Caco-2 (cell line): ENCODE measurements at regions of chr6 and their contacts with region 1.

Region 1: DNA sequence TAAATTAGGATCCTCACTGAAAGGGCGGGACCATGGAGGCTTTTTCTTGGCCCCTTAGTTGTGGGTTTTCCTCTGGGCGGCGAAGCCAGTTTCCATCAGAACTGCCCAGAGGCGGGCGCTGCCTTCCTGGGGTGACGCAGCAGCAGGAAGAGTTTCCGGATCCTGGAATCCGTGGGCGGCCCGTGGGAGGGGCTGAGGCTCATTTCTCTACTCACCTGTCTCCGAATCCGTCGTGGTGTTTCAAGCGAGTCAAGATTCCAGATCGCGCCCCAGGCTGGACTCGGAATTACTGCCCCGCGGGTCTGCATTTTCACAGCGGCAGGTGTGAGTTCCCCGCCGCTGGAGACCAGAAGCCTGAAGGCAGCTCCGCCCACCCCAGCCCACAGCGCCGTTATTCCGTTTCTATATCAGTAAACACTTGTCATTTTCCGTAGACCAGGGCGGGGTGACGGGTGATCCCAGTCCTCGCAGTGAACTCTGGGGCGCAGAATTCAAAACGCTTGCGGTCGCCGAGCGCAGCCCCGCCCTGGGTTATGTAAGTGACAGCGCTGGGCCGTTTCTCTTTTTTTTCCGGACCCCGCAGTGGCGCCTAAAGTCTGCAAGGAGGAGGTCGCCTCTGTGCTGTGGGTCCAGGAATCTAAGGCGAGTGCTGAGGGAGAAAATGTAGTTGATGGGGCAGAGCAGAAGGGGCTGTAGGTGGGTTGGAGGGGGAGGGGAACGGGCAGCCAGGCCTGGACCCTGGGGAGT is 27.2 kb upstream of the POU5F1 start:
- DNase-seq: peak; percentile 81 to 85
- H3K4me3 ChIP-seq: peak overlapping the region; percentile 64
- H3K4me3 Mint-ChIP-seq: peak overlapping the region; percentile 55
- H3K27ac Mint-ChIP-seq: peak overlapping the region; percentile 1
- H3K4me1 ChIP-seq: peaks cover 6% of the 10 kb centered on the region
- H3K4me1 Mint-ChIP-seq: peaks cover 8% of the 10 kb centered on the region
- H3K27me3 ChIP-seq: no peaks in the 10 kb centered on the region
- H3K27me3 Mint-ChIP-seq: no peaks in the 10 kb centered on the region
- CTCF ChIP-seq: no peak

Region 2: GRCh38 chr6:31128093-31128676 is 69.5 kb before region 1 on chr6:
- CTCF ChIA-PET with region 1: interaction called, 12 read pairs
- POLR2A ChIA-PET with region 1: no interaction called
- intact Hi-C with region 1: no loop called
- DNase-seq: peak; percentile 68 to 77
- H3K4me3 ChIP-seq: no peak overlapping the region
- H3K4me3 Mint-ChIP-seq: no peak overlapping the region
- H3K27ac Mint-ChIP-seq: no peak overlapping the region
- H3K4me1 ChIP-seq: no peaks in the 10 kb centered on the region
- H3K4me1 Mint-ChIP-seq: peaks cover 17% of the 10 kb centered on the region
- H3K27me3 ChIP-seq: no peaks in the 10 kb centered on the region
- H3K27me3 Mint-ChIP-seq: peaks cover 6% of the 10 kb centered on the region
- CTCF ChIP-seq: peak; percentile 75 to 89

Region 3: DNA sequence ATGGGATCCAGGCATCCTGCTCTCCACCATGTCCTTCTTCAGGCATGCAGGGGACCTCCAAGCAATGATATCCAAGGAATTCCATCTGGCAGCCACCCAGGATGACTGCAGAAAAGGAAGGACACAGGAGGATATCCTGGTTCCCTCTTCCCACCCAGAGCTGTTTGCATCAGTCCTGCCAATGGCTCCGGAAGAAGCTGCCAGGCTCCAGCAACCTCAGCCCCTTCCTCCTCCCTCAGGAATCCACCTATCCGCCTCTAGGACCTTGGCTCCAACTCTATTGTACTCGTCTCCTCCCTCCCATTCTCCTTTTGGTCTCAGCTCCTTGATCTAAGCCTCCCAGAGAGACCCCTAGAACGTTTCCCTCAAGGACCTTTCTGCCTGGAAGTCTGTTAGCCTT is 58.1 kb before region 1 on chr6:
- CTCF ChIA-PET with region 1: interaction called, 15 read pairs
- POLR2A ChIA-PET with region 1: no interaction called
- intact Hi-C with region 1: loop called (anchors 1 kb)
- DNase-seq: no peak
- H3K4me3 ChIP-seq: no peak overlapping the region
- H3K4me3 Mint-ChIP-seq: no peak overlapping the region
- H3K27ac Mint-ChIP-seq: no peak overlapping the region
- H3K4me1 ChIP-seq: 0 out of 2 replicates have a peak, but pooled peaks cover 3% of the 10 kb centered on the region
- H3K4me1 Mint-ChIP-seq: peaks cover 13% of the 10 kb centered on the region
- H3K27me3 ChIP-seq: no peaks in the 10 kb centered on the region
- H3K27me3 Mint-ChIP-seq: no peaks in the 10 kb centered on the region
- CTCF ChIP-seq: no peak

Region 4: DNA sequence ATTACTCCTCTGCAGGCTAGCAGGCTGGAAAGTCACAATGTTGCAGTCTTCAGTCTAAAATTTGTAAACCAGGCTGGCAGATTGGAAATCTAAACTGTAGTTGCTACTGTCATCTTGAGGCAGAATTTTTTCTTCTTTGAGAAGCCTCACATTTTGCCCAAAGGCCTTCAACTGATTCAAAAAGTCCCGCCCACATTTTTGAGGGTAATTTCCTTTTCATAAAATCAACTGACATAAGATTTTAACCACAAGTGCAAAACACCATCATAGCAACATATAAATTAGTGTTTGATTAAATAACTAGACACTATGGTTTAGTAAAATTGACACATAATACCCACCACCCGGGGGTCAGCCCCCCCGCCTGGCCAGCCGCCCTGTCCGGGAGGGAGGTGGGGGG is 45.8 kb after region 1 on chr6:
- CTCF ChIA-PET with region 1: no interaction called
- POLR2A ChIA-PET with region 1: no interaction called
- intact Hi-C with region 1: no loop called
- DNase-seq: no peak
- H3K4me3 ChIP-seq: no peak overlapping the region
- H3K4me3 Mint-ChIP-seq: no peak overlapping the region
- H3K27ac Mint-ChIP-seq: no peak overlapping the region
- H3K4me1 ChIP-seq: no peaks in the 10 kb centered on the region
- H3K4me1 Mint-ChIP-seq: no peaks in the 10 kb centered on the region
- H3K27me3 ChIP-seq: no peaks in the 10 kb centered on the region
- H3K27me3 Mint-ChIP-seq: peaks cover 5% of the 10 kb centered on the region
- CTCF ChIP-seq: no peak

Region 5: GRCh38 chr6:31271641-31272357 is 74.1 kb after region 1 on chr6 and contains the start of gene HLA-C:
- CTCF ChIA-PET with region 1: no interaction called
- POLR2A ChIA-PET with region 1: no interaction called
- intact Hi-C with region 1: loop called (anchors 2 kb)
- DNase-seq: peak; percentile 86 to 89
- H3K4me3 ChIP-seq: peak within 1 kb of the TSS; percentile 54
- H3K4me3 Mint-ChIP-seq: peak within 1 kb of the TSS; percentile 79
- H3K27ac Mint-ChIP-seq: peak within 1 kb of the TSS; percentile 81
- H3K4me1 ChIP-seq: no peaks in the 10 kb centered on the region
- H3K4me1 Mint-ChIP-seq: peaks cover 12% of the 10 kb centered on the region
- H3K27me3 ChIP-seq: no peaks in the 10 kb centered on the region
- H3K27me3 Mint-ChIP-seq: peaks cover 12% of the 10 kb centered on the region
- CTCF ChIP-seq: no peak
- total RNA-seq, gene HLA-C: 143 and 149 TPM in 2 replicates

Region 6: DNA sequence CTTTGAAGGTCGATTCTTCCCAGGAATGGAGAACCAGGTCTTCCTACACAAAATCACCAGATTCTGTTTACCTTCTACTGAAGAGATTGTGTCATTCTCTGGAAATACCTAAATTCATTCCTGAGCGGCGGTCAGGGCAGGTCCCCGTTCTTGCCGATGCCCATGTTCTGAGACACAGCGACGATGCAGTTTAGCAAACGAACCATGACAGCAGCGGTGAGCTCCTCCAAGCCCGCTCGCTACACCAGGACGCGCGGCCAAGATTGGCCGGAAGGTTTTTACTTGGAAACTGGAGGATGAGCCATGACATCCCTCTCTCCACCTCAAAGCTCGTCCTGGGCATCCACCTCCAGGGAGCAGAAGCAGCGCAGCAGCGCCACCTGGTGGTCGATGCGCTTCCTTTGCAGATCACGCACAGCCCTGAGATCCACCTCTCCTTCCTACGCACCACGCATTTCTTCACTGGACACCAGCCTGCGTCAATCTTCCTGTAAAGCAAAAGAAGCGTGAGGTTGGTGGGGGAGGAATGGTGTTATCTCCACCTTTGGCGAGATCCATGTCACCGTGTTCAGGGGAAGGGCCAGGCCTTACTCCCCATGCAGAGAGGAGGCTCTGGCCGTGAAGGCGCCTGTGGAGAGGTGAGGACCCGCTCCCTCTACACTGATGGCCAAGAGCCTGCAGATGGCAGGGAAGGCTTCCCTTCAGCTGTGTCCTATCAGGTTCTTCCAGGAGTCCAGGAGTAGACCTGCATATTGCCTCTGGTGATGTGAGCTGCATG is 169.2 kb after region 1 on chr6:
- CTCF ChIA-PET with region 1: interaction called, 12 read pairs
- POLR2A ChIA-PET with region 1: no interaction called
- intact Hi-C with region 1: loop called (anchors 1 kb)
- DNase-seq: peak; percentile 84 to 88
- H3K4me3 ChIP-seq: no peak overlapping the region
- H3K4me3 Mint-ChIP-seq: peak overlapping the region; percentile 52
- H3K27ac Mint-ChIP-seq: no peak overlapping the region
- H3K4me1 ChIP-seq: no peaks in the 10 kb centered on the region
- H3K4me1 Mint-ChIP-seq: no peaks in the 10 kb centered on the region
- H3K27me3 ChIP-seq: peaks cover 1% of the 10 kb centered on the region; the same call in 1 of the 2 replicates
- H3K27me3 Mint-ChIP-seq: peaks cover 35% of the 10 kb centered on the region
- CTCF ChIP-seq: peak; percentile 90 to 91